PC-9 (cell line): ENCODE measurements at regions of chr5 and their contacts with region 1.

Region 1: GRCh38 chr5:119332978-119333401 is 22.8 kb upstream of the TNFAIP8 start:
- DNase-seq: no peak
- H3K4me3 ChIP-seq: no peak overlapping the region
- H3K27ac ChIP-seq: no peak overlapping the region
- H3K4me1 ChIP-seq: no peaks in the 10 kb centered on the region
- H3K27me3 ChIP-seq: no peaks in the 10 kb centered on the region
- CTCF ChIP-seq: no peak

Region 2: GRCh38 chr5:119022017-119022745 is 310.8 kb before region 1 on chr5:
- CTCF ChIA-PET with region 1: no interaction called
- POLR2A ChIA-PET with region 1: no interaction called
- intact Hi-C with region 1: loop called (anchors 10 kb)
- DNase-seq: peak in 1 of 2 experiments; percentile 36
- H3K4me3 ChIP-seq: no peak overlapping the region
- H3K27ac ChIP-seq: no peak overlapping the region
- H3K4me1 ChIP-seq: no peaks in the 10 kb centered on the region
- H3K27me3 ChIP-seq: no peaks in the 10 kb centered on the region
- CTCF ChIP-seq: peak; percentile 61

Region 3: DNA sequence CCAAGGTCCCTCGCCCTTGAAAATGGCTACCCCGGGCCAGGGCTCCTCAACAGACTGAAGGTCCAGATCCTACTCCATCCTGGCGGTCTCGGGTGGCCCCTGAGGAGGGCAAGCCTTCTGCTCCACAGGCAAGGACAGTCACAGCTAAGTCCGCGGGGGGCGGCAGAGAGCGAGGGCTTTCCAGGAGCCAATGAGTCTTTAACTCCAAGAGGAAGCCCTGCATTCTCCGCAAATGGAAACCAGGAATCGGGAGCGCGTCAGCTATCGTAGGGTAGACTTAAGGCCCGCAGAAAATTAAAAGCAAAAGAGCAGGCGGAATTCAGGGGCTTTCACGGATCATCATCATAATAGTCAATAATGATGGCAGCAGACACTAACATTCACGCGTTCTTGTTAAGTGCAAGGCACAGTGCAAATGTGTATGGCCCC is 65.0 kb before region 1 on chr5:
- CTCF ChIA-PET with region 1: no interaction called
- POLR2A ChIA-PET with region 1: no interaction called
- intact Hi-C with region 1: no loop called
- DNase-seq: peak; percentile 76 to 79
- H3K4me3 ChIP-seq: peak overlapping the region; percentile 95
- H3K27ac ChIP-seq: no peak overlapping the region
- H3K4me1 ChIP-seq: peaks cover 18% of the 10 kb centered on the region
- H3K27me3 ChIP-seq: no peaks in the 10 kb centered on the region
- CTCF ChIP-seq: no peak; the same call in 1 of the 2 replicates